ENCODE measurements at regions of chr1 and their contacts with region 1.

Region 1: GRCh38 chr1:18597160-18598042 is 33.2 kb upstream of the PAX7 start:
- DNase-seq: peak; percentile 77
- H3K4me3 ChIP-seq: no peak overlapping the region; a peak in 1 of 4 replicates
- H3K27ac ChIP-seq: no peak overlapping the region
- H3K4me1 ChIP-seq: peaks cover 0 to 10% of the 10 kb centered on the region in 2 experiments; a peak in 1 of 4 replicates
- H3K27me3 ChIP-seq: peaks cover 4% of the 10 kb centered on the region; the same call in 1 of the 2 replicates
- CTCF ChIP-seq: peak; percentile 93
- EP300 ChIP-seq: no peak
- RAD21 ChIP-seq: peak; percentile 94

Region 2: DNA sequence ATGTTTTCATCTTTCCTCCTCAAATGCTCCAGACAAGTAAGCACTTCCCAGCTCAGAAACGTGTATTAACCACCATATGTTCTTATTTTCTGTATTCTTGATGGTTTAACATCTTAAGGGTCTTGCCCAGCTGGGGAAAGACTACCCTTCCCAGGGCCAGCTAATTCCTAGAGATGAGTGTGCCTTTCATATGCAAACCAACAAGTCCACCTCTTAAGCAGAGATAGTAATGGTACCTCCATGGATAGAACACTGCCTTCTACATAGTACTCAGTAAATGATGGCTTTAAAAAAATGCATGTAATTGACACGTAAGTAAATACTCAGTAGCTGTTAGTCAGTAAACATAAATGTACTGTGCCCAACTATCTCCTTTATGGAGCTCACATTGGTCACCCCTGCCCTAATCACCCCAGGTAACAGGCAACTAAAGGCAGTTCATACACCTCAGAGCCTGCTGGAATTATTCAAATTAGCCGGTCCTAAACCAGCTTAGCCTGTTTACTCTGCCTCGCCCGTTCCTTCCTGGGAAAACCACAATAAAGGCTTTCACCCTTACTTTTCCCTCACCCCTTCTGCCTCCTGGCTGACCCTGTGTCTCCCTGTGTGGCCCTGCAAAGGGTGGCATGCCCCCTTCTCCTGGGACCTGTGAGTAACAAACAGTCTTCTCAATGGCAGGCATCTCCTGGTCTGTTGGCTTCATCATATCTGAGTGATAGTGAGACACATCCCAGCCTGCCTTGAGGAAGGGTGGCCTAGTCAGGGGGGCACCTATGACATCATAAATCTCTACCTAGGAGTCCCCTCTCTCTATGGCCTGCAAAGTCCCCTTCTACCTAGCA is 156.8 kb before region 1 on chr1:
- CTCF ChIA-PET with region 1: no interaction called
- POLR2A ChIA-PET with region 1: no interaction called
- DNase-seq: no peak
- H3K4me3 ChIP-seq: no peak overlapping the region
- H3K27ac ChIP-seq: no peak overlapping the region
- H3K4me1 ChIP-seq: no peaks in the 10 kb centered on the region
- H3K27me3 ChIP-seq: no peaks in the 10 kb centered on the region
- CTCF ChIP-seq: no peak
- EP300 ChIP-seq: no peak
- RAD21 ChIP-seq: no peak

Region 3: GRCh38 chr1:18569811-18570545 is 27.4 kb before region 1 on chr1:
- CTCF ChIA-PET with region 1: interaction called, 16 read pairs
- POLR2A ChIA-PET with region 1: no interaction called
- DNase-seq: peak; percentile 32
- H3K4me3 ChIP-seq: no peak overlapping the region
- H3K27ac ChIP-seq: peak overlapping the region in 1 of 2 experiments; percentile 35; a peak in 2 of 4 replicates
- H3K4me1 ChIP-seq: peaks cover 0 to 15% of the 10 kb centered on the region in 2 experiments; a peak in 1 of 4 replicates
- H3K27me3 ChIP-seq: no peaks in the 10 kb centered on the region
- CTCF ChIP-seq: no peak
- EP300 ChIP-seq: peak in 1 of 2 experiments; percentile 2; a peak in 1 of 4 replicates
- RAD21 ChIP-seq: no peak

Region 4: GRCh38 chr1:18618546-18619466 is 21.4 kb after region 1 on chr1:
- CTCF ChIA-PET with region 1: interaction called, 23 read pairs
- POLR2A ChIA-PET with region 1: no interaction called
- DNase-seq: no peak
- H3K4me3 ChIP-seq: no peak overlapping the region
- H3K27ac ChIP-seq: no peak overlapping the region
- H3K4me1 ChIP-seq: no peaks in the 10 kb centered on the region
- H3K27me3 ChIP-seq: no peaks in the 10 kb centered on the region; the same call in 1 of the 2 replicates
- CTCF ChIP-seq: no peak
- EP300 ChIP-seq: no peak
- RAD21 ChIP-seq: no peak

Region 5: GRCh38 chr1:18661404-18662284 is 64.2 kb after region 1 on chr1:
- CTCF ChIA-PET with region 1: interaction called, 18 read pairs
- POLR2A ChIA-PET with region 1: no interaction called
- DNase-seq: no peak
- H3K4me3 ChIP-seq: no peak overlapping the region
- H3K27ac ChIP-seq: no peak overlapping the region
- H3K4me1 ChIP-seq: no peaks in the 10 kb centered on the region
- H3K27me3 ChIP-seq: peaks cover 8% of the 10 kb centered on the region; the same call in 1 of the 2 replicates
- CTCF ChIP-seq: no peak
- EP300 ChIP-seq: no peak
- RAD21 ChIP-seq: no peak

Region 6: DNA sequence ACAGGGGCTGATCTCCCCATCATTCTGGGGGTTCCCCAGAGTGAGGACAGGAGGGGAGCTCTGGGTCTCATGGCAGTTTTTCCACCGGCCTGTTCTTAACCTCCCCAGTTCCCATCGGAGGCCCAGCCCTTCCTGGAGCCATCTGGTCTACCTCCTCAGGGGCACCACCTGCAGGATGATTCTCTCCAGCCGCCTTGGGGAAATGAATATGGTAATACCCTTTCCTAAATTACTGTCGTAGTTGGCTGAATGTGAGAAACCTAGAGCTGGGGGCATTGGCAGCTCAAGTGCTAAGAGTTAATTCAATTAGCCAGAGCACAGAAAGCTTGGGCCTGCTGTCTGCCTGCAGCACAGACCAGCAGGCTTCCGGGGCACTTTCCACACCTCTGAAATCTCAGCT is 197.2 kb after region 1 on chr1:
- CTCF ChIA-PET with region 1: interaction called, 21 read pairs
- POLR2A ChIA-PET with region 1: no interaction called
- DNase-seq: peak; percentile 74
- H3K4me3 ChIP-seq: no peak overlapping the region
- H3K27ac ChIP-seq: no peak overlapping the region
- H3K4me1 ChIP-seq: peaks cover 0 to 30% of the 10 kb centered on the region in 2 experiments; a peak in 1 of 4 replicates
- H3K27me3 ChIP-seq: no peaks in the 10 kb centered on the region
- CTCF ChIP-seq: no peak
- EP300 ChIP-seq: no peak
- RAD21 ChIP-seq: peak; percentile 27; the same call in 1 of the 2 replicates

Region 7: GRCh38 chr1:18836654-18837053 is 239.3 kb after region 1 on chr1:
- CTCF ChIA-PET with region 1: interaction called, 16 read pairs
- POLR2A ChIA-PET with region 1: no interaction called
- DNase-seq: peak; percentile 41
- H3K4me3 ChIP-seq: no peak overlapping the region
- H3K27ac ChIP-seq: no peak overlapping the region
- H3K4me1 ChIP-seq: peaks cover 0 to 1% of the 10 kb centered on the region in 2 experiments; a peak in 1 of 4 replicates
- H3K27me3 ChIP-seq: no peaks in the 10 kb centered on the region; the same call in 1 of the 2 replicates
- CTCF ChIP-seq: no peak
- EP300 ChIP-seq: no peak
- RAD21 ChIP-seq: no peak

Region 8: GRCh38 chr1:18902523-18903290 is 305.3 kb after region 1 on chr1 and contains the start of gene ALDH4A1:
- CTCF ChIA-PET with region 1: interaction called, 40 read pairs
- POLR2A ChIA-PET with region 1: no interaction called
- DNase-seq: peak; percentile 98
- H3K4me3 ChIP-seq: peak within 1 kb of the TSS; percentile 93 to 94
- H3K27ac ChIP-seq: peak within 1 kb of the TSS; percentile 76 to 93
- H3K4me1 ChIP-seq: peaks cover 9 to 16% of the 10 kb centered on the region in 2 experiments; a peak in 2 of 4 replicates
- H3K27me3 ChIP-seq: no peaks in the 10 kb centered on the region
- CTCF ChIP-seq: no peak
- EP300 ChIP-seq: 0 out of 4 replicates have a peak, but pooled peaks of 1 of the 2 experiments have one; percentile 36
- RAD21 ChIP-seq: no peak
- polyA plus RNA-seq, gene ALDH4A1: 18.5 and 26.2 TPM in 2 replicates

Region 9: GRCh38 chr1:19179597-19180264 is 582.3 kb after region 1 on chr1:
- CTCF ChIA-PET with region 1: no interaction called
- POLR2A ChIA-PET with region 1: no interaction called
- DNase-seq: peak; percentile 30
- H3K4me3 ChIP-seq: no peak overlapping the region
- H3K27ac ChIP-seq: peak overlapping the region in 1 of 2 experiments; percentile 28; a peak in 2 of 4 replicates
- H3K4me1 ChIP-seq: no peaks in the 10 kb centered on the region
- H3K27me3 ChIP-seq: no peaks in the 10 kb centered on the region
- CTCF ChIP-seq: peak; percentile 52
- EP300 ChIP-seq: no peak
- RAD21 ChIP-seq: peak; percentile 33

Measured in SK-N-SH (cell line).